ENCODE measurements at regions of chr19 and their contacts with region 1.

Region 1: DNA sequence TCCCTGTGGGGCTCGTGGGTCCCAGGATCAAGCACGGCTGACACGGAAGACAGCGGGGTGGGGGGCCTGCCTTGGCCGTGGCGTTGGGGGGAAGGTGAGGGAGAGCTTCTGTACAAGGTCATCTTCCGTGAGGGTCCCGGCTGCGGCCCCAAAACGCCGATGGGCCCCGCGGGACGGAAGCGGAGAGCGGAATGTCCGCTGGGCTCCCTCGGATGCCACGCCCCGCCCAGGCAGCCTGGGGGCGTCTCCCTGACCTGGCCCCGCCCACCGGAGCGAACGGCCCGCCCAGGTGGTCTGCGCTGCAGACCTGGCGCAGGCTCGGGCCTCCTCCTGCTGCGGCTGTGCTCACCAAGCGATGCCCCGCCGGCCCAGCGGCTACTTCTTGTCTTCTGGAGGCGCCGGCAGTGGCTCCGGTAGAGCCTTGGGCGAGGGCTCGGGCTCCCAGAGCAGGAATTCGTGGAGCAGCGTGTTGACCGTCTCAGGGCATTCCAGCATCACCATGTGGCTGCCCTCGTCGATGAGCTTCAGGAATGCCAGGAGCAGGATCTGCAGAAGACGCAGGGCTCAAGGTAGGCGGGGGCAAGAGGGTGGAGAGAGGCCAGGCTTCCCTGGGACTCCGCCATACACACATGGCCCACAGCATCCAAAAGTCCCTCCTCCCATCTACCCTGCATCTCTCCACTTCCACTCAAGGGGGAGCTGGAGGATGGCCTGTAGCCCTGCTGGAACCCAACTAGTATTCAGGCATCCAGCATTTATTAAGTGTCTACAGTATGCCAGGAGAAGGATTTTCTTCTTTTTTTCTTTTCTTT is 10.7 kb downstream of the ABHD8 start:
- DNase-seq: no peak
- H3K4me3 ChIP-seq: peak overlapping the region; percentile 50 to 59
- H3K27ac ChIP-seq: peak overlapping the region; percentile 63
- H3K4me1 ChIP-seq: peaks cover 9% of the 10 kb centered on the region
- H3K27me3 ChIP-seq: no peaks in the 10 kb centered on the region
- CTCF ChIP-seq: peak in 2 of 3 experiments; percentile 40 to 52
- POLR2A ChIP-seq: no peak

Region 2: DNA sequence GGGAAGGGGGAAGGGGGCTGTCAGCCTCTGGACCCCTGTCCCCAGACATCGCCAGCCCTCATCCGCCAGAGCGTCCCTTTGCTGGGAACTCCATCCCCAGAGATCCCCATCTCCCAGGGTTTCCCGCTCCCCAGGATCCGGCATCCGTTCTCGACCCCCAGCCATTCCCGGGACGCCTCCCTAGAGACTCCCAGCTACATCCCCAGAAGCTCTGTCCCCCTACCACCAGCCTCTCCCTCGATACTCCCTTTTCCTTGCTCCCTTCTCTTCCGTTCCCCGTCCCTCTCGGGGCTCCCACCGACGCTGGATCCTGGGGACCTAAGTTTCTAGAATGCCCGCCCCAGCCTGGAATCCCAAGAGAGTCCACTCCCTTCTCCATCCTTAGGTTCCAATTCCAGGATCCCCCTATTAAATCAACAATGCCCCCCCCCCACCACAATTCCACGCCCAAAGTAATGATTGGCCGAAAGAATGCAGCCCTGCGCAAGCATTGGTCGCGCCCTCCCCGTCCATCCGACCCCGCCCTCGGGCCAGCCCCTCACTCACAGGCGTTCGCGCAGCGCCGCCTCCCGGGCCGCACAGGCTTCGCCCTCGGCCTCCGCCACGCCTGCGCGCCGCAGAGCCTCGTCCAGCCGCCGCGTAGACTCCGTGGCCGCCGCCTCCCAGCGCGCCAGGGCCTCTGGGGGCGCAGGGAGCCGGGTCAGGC is 98.3 kb after region 1 on chr19:
- intact Hi-C with region 1: loop called (anchors 2 kb)
- DNase-seq: no peak
- H3K4me3 ChIP-seq: peak overlapping the region; percentile 44 to 54
- H3K27ac ChIP-seq: no peak overlapping the region
- H3K4me1 ChIP-seq: peaks cover 10% of the 10 kb centered on the region
- H3K27me3 ChIP-seq: no peaks in the 10 kb centered on the region
- CTCF ChIP-seq: peak; percentile 57 to 64 (median 61)
- POLR2A ChIP-seq: no peak

Measured in vagina (tissue), 2 donors.